Right ventricle myocardium superior (tissue), 1 donor: ENCODE measurements at regions of chr14 and their contacts with region 1.

Region 1: DNA sequence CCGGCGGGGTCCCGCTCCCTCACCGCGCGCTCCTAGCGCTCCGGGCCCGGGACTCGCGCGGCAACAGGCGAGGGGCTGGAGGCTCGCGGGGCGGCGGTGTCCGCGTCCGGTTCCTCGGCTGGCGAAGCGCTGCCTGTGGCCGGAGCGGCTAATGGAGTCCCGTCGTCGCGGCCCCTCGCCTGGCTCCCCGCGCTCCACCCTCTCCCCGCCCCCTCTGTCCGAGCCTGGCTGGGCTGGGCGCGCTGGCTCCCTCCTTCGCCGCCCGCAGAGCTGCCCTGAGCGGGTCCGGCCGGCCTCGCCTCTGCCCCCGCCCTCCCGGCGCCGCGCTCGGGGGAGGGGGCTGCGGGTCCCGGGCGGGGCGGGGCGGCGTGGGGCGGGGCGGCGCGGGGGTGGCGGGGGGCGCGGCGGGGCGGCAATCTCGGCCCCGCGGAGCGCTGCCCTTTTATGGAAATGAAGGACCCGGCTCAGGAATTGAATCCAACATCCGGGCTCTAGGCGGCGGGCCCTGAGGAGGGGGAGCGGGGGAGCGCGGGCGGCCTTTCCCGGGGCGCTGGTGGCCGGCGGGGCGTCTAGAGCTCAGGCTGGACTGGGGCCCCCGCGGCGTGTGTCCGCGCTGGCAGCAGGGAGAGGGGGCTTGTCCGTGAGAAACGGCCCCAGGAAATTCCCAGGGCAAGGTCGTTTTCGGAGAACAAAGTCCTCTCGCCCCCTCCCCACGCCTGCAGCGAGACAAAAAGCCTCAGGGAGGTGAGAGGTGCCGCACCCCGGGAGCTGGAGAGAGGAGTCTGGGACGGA is at the start of gene FERMT2:
- DNase-seq: peak; percentile 92
- ATAC-seq: peak; percentile 91
- total RNA-seq, gene FERMT2: 116 TPM

Region 2: GRCh38 chr14:52684065-52684464 is 267.0 kb before region 1 on chr14:
- intact Hi-C with region 1: no loop called
- DNase-seq: no peak
- ATAC-seq: no peak

Region 3: GRCh38 chr14:52902971-52903385 is 48.1 kb before region 1 on chr14:
- intact Hi-C with region 1: loop called (anchors 5 kb)
- DNase-seq: no peak
- ATAC-seq: peak; percentile 43

Region 4: DNA sequence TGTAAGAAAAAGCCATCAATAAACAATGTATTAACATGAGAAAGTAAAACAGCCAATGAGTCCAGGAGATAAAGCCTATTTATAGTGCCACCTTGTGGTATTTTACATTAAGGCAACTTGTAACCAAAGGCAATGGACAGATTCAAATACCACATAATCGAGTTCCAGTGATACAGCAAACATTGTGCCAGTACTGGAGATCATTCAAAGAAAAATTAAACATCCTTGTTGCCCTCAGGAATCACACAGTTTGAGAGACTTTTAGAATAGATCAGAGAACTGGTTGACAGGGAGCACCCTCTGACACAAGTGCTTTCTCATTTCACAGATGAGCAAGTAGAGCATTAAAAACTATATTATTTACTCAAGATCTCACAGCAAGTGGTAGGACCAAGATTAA is 103.9 kb after region 1 on chr14:
- intact Hi-C with region 1: loop called (anchors 5 kb)
- DNase-seq: no peak
- ATAC-seq: peak; percentile 84